Esophagus muscularis mucosa (tissue), 4 donors: ENCODE measurements at regions of chr4 and their contacts with region 1.

Region 1: GRCh38 chr4:113969709-113970334 is 9.6 kb downstream of the ARSJ start:
- DNase-seq: no peak
- H3K4me3 ChIP-seq: no peak overlapping the region
- H3K27ac ChIP-seq: peak overlapping the region; percentile 10 to 31 (median 22)
- H3K4me1 ChIP-seq: peaks cover 0 to 36% (median 20%) of the 10 kb centered on the region in 4 donors
- H3K27me3 ChIP-seq: no peaks in the 10 kb centered on the region
- CTCF ChIP-seq: no peak
- EP300 ChIP-seq: no peak
- POLR2A ChIP-seq: no peak

Region 2: DNA sequence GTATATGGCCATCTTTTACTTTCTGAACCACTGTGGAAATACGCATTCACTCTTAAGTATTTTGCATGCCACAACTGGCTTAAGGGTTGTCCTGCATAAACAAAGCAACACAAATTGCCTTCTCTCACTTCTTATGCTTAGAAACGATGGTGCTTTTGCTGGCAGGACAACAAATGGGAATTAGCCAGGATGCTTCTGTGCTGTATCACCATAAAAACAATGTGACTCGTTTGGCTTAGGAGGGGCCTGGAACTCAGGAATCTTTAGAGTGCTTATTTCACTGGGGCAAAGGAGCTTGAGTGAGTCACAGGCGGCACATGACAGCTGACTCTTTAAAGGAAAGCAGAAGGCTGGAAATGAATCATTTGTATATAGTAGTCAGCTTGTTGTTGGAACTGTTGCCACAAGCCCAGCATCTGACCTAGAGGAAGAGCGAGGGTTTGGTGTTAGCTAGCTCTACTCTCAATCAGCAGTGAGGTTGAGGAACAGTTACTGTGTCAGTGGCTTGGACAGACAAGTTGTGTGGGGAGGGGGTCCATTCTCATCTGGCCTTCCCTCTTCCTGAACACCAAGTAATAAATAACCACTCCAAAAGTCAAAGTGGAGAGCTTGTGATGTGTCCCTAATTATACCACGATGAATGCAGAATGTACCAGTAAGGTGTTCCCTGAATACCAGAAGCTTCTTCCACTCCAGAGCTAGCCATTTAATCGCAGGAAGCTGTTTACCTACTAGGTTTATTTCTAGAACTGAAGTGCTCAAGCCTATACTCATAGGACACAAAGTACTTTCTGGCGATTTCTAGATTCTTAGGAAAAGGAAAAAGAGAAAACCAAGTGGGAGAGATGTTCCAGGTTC is 501.4 kb before region 1 on chr4:
- intact Hi-C with region 1: loop called (anchors 10 kb)
- DNase-seq: peak; percentile 93
- H3K4me3 ChIP-seq: peak overlapping the region in 3 of 4 donors; percentile 0 to 38 (median 20)
- H3K27ac ChIP-seq: peak overlapping the region; percentile 83 to 87 (median 84)
- H3K4me1 ChIP-seq: peaks cover 31 to 42% (median 32%) of the 10 kb centered on the region in 4 donors
- H3K27me3 ChIP-seq: no peaks in the 10 kb centered on the region
- CTCF ChIP-seq: no peak
- EP300 ChIP-seq: peak; percentile 28
- POLR2A ChIP-seq: no peak

Region 3: DNA sequence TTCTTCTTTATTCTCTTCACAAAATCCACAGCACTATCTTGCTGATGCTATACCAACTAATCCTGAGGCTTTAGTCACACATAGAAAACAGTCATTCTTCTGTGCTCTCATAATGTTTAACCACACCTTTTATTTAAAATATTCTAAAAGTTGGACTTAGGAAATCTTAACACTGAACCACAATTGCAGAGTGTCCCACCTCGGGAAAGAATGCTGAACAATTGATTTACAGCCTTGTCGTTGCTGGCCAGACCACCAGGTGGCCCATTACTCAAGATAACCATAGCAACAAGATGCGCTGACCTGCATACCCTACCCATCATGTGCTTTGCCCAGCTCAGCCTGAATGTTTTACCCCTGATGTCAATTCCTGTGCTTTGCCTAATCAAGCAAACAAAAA is 91.2 kb before region 1 on chr4:
- intact Hi-C with region 1: no loop called
- DNase-seq: no peak
- H3K4me3 ChIP-seq: no peak overlapping the region
- H3K27ac ChIP-seq: no peak overlapping the region
- H3K4me1 ChIP-seq: no peaks in the 10 kb centered on the region
- H3K27me3 ChIP-seq: no peaks in the 10 kb centered on the region
- CTCF ChIP-seq: peak in 1 of 3 experiments; percentile 13
- EP300 ChIP-seq: no peak
- POLR2A ChIP-seq: no peak